ENCODE measurements at regions of chr11 and their contacts with region 1.

Region 1: DNA sequence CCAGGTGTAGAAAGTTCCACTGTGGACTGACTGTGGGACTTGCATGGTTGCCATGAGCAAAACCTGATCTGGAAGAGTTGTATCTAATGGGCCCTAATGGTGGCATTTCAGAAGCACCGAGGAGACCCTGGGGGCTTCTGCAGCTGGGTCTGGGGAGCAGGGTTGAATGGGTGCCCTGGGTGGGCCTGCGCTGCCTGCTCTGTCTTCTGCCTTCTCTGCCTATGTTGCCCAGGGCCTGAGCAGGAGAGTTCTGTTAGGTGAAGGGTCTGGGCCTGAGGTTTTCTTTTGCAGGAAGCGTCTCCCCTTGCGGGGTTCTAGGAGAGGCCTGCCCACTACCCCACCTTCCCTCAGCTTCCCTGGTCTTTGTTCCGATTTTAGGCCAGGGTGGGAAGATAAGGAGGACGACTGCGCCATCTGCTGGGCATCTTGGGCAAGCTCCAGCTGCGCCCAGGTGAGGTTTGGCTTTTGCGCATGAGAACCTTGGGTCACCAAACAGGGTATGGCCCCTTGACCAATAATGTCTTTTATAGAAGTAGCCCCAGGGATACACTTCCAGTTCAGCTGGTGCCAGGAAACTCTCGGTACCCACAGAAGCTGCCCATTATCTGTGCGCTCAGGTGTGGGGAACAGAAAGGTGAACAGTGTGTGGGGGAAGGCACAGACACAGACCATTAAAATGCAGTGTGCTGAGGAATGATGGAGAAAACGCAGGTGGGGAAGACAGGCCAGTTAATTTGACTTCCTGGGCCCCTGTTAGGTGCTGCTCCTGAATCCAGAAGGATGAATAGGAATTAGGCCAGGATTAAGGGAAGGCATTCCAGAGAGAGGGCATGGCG is 23.2 kb downstream of the COMMD9 start:
- DNase-seq: peak; percentile 69 to 88
- H3K4me3 ChIP-seq: no peak overlapping the region
- H3K27ac ChIP-seq: no peak overlapping the region
- H3K4me1 ChIP-seq: peaks cover 0 to 1% (median 0%) of the 10 kb centered on the region in 4 experiments; a peak in 1 of 7 replicates
- H3K27me3 ChIP-seq: 0 out of 7 replicates have a peak, but pooled peaks cover 0 to 2% (median 0%) of the 10 kb centered on the region in 4 experiments
- CTCF ChIP-seq: peak; percentile 92 to 95 (median 94)
- EP300 ChIP-seq: no peak
- POLR2A ChIP-seq: no peak
- RAD21 ChIP-seq: peak; percentile 96 to 97

Region 2: GRCh38 chr11:35617687-35618496 is 648.1 kb before region 1 on chr11 and contains the start of gene FJX1:
- CTCF ChIA-PET with region 1: interaction called, 15 read pairs
- POLR2A ChIA-PET with region 1: no interaction called
- DNase-seq: peak; percentile 44 to 86
- H3K4me3 ChIP-seq: peak within 1 kb of the TSS; percentile 55 to 76 (median 72)
- H3K27ac ChIP-seq: no peak within 1 kb of the TSS
- H3K4me1 ChIP-seq: peaks cover 3 to 19% (median 6%) of the 10 kb centered on the region in 4 experiments; a peak in 5 of 7 replicates
- H3K27me3 ChIP-seq: peaks cover 7 to 29% (median 22%) of the 10 kb centered on the region in 4 experiments
- CTCF ChIP-seq: no peak
- EP300 ChIP-seq: no peak
- POLR2A ChIP-seq: no peak
- RAD21 ChIP-seq: no peak
- total RNA-seq, gene FJX1: 13.3 and 14.2 TPM in 2 replicates

Region 3: DNA sequence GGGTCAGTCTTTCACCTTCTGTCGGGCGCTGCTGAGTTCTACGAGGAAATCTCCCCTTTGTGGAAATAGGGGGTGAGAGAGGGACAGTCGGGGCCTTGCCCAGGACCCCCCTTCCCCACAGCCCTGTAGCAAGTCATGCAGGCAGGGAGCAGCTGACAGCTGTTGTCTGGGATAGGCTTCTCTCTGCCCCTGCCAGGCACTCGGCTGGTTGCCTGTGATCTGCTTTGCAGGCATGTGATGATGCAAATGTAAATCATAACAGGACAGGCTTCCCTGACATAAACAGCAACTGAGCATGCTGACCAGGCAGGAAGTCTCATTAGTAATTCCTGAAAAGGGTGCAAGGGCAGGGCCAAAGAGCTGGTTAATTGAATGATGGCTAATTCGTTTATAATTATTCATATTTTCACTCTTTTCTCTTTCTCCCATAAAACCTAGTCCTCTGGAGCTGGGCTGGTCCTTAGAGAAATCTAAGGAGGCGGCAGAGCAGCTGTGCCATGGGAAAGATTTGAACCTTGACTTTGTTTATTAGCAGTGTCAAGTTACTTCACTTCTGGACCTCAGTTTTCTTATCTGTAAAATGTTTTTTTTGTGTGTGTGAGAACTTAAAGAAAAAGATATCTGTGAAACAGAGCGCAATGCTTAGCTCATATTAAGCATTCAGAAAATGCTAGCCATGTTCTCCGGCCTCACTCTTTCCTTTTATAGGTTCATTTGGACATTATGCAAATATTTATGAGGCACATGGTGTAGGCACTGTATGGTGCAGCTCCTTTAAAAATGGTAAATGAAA is 192.4 kb before region 1 on chr11:
- CTCF ChIA-PET with region 1: interaction called, 31 read pairs
- POLR2A ChIA-PET with region 1: no interaction called
- DNase-seq: no peak
- H3K4me3 ChIP-seq: no peak overlapping the region
- H3K27ac ChIP-seq: peak overlapping the region; percentile 19; the same call in 1 of the 2 replicates
- H3K4me1 ChIP-seq: peaks cover 8 to 32% (median 27%) of the 10 kb centered on the region in 4 experiments
- H3K27me3 ChIP-seq: no peaks in the 10 kb centered on the region
- CTCF ChIP-seq: no peak
- EP300 ChIP-seq: no peak
- POLR2A ChIP-seq: no peak
- RAD21 ChIP-seq: no peak

Region 4: GRCh38 chr11:36156161-36156816 is 109.7 kb before region 1 on chr11:
- CTCF ChIA-PET with region 1: interaction called, 14 read pairs
- POLR2A ChIA-PET with region 1: no interaction called
- DNase-seq: no peak
- H3K4me3 ChIP-seq: no peak overlapping the region
- H3K27ac ChIP-seq: no peak overlapping the region
- H3K4me1 ChIP-seq: peaks cover 0 to 11% (median 3%) of the 10 kb centered on the region in 4 experiments; a peak in 3 of 7 replicates
- H3K27me3 ChIP-seq: no peaks in the 10 kb centered on the region
- CTCF ChIP-seq: peak in 1 of 3 experiments; percentile 11; a peak in 1 of 4 replicates
- EP300 ChIP-seq: no peak
- POLR2A ChIP-seq: no peak
- RAD21 ChIP-seq: peak in 1 of 2 experiments; percentile 17; a peak in 2 of 4 replicates

Region 5: GRCh38 chr11:36249246-36249645 is 16.8 kb before region 1 on chr11:
- CTCF ChIA-PET with region 1: interaction called, 25 read pairs
- POLR2A ChIA-PET with region 1: no interaction called
- DNase-seq: no peak
- H3K4me3 ChIP-seq: no peak overlapping the region
- H3K27ac ChIP-seq: no peak overlapping the region
- H3K4me1 ChIP-seq: no peaks in the 10 kb centered on the region
- H3K27me3 ChIP-seq: no peaks in the 10 kb centered on the region
- CTCF ChIP-seq: no peak
- EP300 ChIP-seq: no peak
- POLR2A ChIP-seq: no peak
- RAD21 ChIP-seq: no peak

Region 6: GRCh38 chr11:36487619-36488018 is 221.6 kb after region 1 on chr11:
- CTCF ChIA-PET with region 1: no interaction called
- POLR2A ChIA-PET with region 1: no interaction called
- DNase-seq: no peak
- H3K4me3 ChIP-seq: no peak overlapping the region
- H3K27ac ChIP-seq: no peak overlapping the region
- H3K4me1 ChIP-seq: no peaks in the 10 kb centered on the region
- H3K27me3 ChIP-seq: no peaks in the 10 kb centered on the region
- CTCF ChIP-seq: no peak
- EP300 ChIP-seq: no peak
- POLR2A ChIP-seq: no peak
- RAD21 ChIP-seq: no peak

Measured in H1 (cell line).